GM12878 (cell line): ENCODE measurements at regions of chr12 and their contacts with region 1.

Region 1: DNA sequence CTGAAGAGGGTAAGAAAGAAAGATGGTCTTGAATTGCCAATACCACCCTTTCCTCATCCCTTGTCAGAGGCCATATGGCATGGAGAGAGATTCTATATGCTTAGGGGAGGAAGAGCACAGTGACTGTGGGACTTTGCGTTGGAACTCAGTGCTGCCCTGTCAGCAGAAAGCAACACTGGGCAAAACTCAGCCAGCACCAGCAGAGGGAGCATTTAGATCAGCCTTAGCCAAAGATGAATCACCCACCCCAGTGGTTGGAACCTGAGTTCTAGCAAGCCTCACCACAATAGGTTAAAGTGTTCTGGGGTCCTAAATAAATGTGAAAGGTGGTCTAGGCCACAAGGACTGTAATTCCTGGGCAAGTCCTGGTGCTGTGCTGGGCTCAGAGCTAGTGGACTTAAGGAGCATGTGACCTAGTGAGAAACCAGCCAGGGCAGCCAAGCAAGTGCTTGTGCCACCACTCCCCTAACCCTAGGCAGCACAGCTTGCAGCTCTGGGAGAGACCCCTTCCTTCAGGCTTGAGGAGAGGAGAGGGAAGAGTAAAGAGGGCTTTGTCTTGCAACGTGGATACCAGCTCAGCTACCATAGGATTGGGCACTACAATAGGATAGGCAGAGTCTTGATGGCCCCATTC is 11.4 kb upstream of the BCAT1 start:
- DNase-seq: peak; percentile 56
- ATAC-seq: peak; percentile 94
- H3K4me3 ChIP-seq: no peak overlapping the region
- H3K27ac ChIP-seq: no peak overlapping the region
- H3K4me1 ChIP-seq: peaks cover 7% of the 10 kb centered on the region
- H3K27me3 ChIP-seq: no peaks in the 10 kb centered on the region
- CTCF ChIP-seq: peak; percentile 75 to 85 (median 76)
- EP300 ChIP-seq: no peak
- POLR2A ChIP-seq: no peak
- RAD21 ChIP-seq: peak; percentile 77

Region 2: GRCh38 chr12:24972078-24972477 is 11.7 kb after region 1 on chr12:
- CTCF ChIA-PET with region 1: interaction called, 5 read pairs
- POLR2A ChIA-PET with region 1: no interaction called
- RAD21 ChIA-PET with region 1: interaction called, 4 read pairs
- SMC1A ChIA-PET with region 1: interaction called, 13 read pairs
- in situ Hi-C with region 1: no loop called
- intact Hi-C with region 1: no loop called
- DNase-seq: no peak
- ATAC-seq: no peak
- H3K4me3 ChIP-seq: no peak overlapping the region
- H3K27ac ChIP-seq: no peak overlapping the region
- H3K4me1 ChIP-seq: peaks cover 5% of the 10 kb centered on the region
- H3K27me3 ChIP-seq: no peaks in the 10 kb centered on the region
- CTCF ChIP-seq: no peak
- EP300 ChIP-seq: no peak
- POLR2A ChIP-seq: no peak
- RAD21 ChIP-seq: no peak

Region 3: GRCh38 chr12:25151476-25151875 is 191.1 kb after region 1 on chr12:
- CTCF ChIA-PET with region 1: interaction called, 17 read pairs
- POLR2A ChIA-PET with region 1: interaction called, 5 read pairs
- RAD21 ChIA-PET with region 1: interaction called, 3 read pairs
- SMC1A ChIA-PET with region 1: interaction called, 3 read pairs
- in situ Hi-C with region 1: no loop called
- intact Hi-C with region 1: no loop called
- DNase-seq: no peak
- ATAC-seq: no peak
- H3K4me3 ChIP-seq: no peak overlapping the region
- H3K27ac ChIP-seq: no peak overlapping the region
- H3K4me1 ChIP-seq: peaks cover 17% of the 10 kb centered on the region
- H3K27me3 ChIP-seq: no peaks in the 10 kb centered on the region
- CTCF ChIP-seq: no peak
- EP300 ChIP-seq: no peak
- POLR2A ChIP-seq: no peak
- RAD21 ChIP-seq: no peak